ENCODE measurements at regions of chr7 and their contacts with region 1.

Region 1: DNA sequence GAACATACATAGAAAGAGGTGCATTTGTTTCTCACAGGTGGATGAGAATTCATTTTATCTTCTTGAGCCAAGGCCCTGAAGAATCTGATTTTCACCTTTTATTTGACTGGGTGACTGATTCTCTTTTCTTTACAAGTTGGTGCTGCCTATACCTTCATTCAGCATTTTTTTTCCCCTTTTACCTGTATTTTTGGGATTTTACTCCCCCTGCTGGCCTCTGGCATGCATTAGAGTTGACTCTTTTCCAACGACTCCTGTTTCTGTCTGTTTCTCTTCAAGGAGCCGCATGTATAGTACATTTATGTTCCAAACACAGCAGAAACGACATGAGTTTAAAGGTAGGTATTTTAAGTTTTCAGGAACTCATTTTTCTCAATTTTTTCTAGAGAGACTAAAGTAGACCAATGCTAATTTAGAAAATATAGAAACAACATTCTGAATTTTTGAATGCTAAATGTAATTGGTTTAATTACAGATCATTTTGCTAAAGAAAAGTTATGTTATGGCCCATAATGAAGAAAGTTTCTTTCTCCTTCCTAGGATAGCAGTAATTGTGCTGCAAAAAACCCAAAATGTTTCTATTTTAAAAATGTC is 149.8 kb upstream of the HDAC9 start:
- DNase-seq: no peak
- ATAC-seq: no peak
- H3K4me3 ChIP-seq: no peak overlapping the region
- H3K27ac ChIP-seq: no peak overlapping the region
- H3K4me1 ChIP-seq: no peaks in the 10 kb centered on the region
- H3K27me3 ChIP-seq: no peaks in the 10 kb centered on the region
- CTCF ChIP-seq: peak; percentile 31 to 65 (median 49)
- POLR2A ChIP-seq: no peak

Region 2: DNA sequence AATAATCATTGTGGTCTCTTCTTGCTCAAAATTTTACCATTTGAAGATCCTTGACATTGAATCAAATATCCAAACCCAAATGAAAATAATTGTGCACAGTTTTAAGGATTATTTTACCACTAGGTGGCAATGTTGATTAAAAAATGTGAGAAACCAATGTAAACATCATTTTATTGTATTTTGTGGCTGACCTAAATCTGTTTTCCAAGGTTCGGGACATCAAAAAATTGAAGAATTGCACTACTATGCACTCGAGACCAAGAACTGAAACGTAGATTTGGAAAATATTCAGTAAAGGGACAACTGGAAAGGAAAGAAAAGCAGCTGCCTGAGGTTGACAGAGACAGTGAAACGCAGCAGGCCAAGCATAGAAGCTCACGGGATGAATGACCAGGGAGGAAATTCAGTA is 664.8 kb before region 1 on chr7:
- in situ Hi-C with region 1: loop called in 2 of 4 experiments (anchors 25 kb)
- intact Hi-C with region 1: no loop called
- DNase-seq: no peak
- ATAC-seq: no peak
- H3K4me3 ChIP-seq: no peak overlapping the region
- H3K27ac ChIP-seq: no peak overlapping the region
- H3K4me1 ChIP-seq: peaks cover 3 to 4% of the 10 kb centered on the region in 2 donors
- H3K27me3 ChIP-seq: no peaks in the 10 kb centered on the region
- CTCF ChIP-seq: peak; percentile 15 to 57 (median 25)
- POLR2A ChIP-seq: no peak

Region 3: GRCh38 chr7:18068745-18069144 is 277.0 kb before region 1 on chr7:
- in situ Hi-C with region 1: no loop called
- intact Hi-C with region 1: loop called (anchors 5 kb)
- DNase-seq: no peak
- ATAC-seq: no peak
- H3K4me3 ChIP-seq: no peak overlapping the region
- H3K27ac ChIP-seq: no peak overlapping the region
- H3K4me1 ChIP-seq: no peaks in the 10 kb centered on the region
- H3K27me3 ChIP-seq: no peaks in the 10 kb centered on the region
- CTCF ChIP-seq: no peak
- POLR2A ChIP-seq: no peak

Region 4: DNA sequence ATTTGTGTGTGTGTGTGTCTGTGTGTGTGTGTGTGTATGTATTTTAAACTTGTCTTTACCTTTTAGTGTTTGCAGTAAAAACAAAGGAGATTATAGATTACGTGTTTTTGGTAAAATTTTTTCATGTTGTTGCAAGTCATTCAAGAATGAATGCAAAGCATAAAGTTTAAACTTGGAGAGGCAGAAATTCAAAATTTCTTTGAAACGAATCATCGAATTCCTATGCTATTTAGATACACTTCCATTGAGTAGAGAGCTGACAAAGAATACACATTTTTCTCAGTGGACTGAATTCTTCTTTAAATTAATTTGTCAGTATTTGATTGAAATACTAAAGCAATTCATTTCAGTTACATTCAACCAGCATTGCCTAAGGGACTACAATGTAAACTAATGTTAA is 83.8 kb after region 1 on chr7:
- in situ Hi-C with region 1: no loop called
- intact Hi-C with region 1: no loop called
- DNase-seq: no peak
- ATAC-seq: no peak
- H3K4me3 ChIP-seq: no peak overlapping the region
- H3K27ac ChIP-seq: no peak overlapping the region
- H3K4me1 ChIP-seq: no peaks in the 10 kb centered on the region
- H3K27me3 ChIP-seq: no peaks in the 10 kb centered on the region
- CTCF ChIP-seq: no peak
- POLR2A ChIP-seq: no peak